ENCODE measurements at regions of chr3 and their contacts with region 1.

Region 1: DNA sequence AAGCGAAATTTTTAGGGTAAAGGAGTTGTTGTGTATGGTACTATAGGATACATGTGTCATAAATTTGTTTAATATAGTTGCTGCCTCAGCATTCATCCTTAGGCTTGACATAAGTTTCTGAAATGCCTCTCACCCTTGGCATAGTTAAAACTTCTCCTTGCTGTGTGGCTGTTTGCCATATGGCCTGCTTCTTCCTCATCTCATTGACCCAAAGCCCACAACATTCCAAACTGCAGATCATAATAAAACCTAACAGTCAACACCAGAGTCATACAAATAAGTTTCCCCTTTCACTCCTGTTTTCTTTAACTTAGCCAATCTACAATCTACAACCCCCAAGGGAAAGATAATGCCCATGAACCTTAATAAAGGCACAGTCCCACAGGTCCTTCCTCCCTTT is 136.6 kb downstream of the TMCC1 start:
- DNase-seq: peak; percentile 66
- ATAC-seq: peak; percentile 80
- H3K4me3 ChIP-seq: no peak overlapping the region
- H3K27ac ChIP-seq: no peak overlapping the region
- H3K4me1 ChIP-seq: peaks cover 2% of the 10 kb centered on the region; the same call in 1 of the 2 replicates
- H3K27me3 ChIP-seq: no peaks in the 10 kb centered on the region
- CTCF ChIP-seq: no peak
- POLR2A ChIP-seq: no peak
- RAD21 ChIP-seq: no peak

Region 2: GRCh38 chr3:129801354-129801753 is 44.5 kb after region 1 on chr3:
- CTCF ChIA-PET with region 1: no interaction called
- POLR2A ChIA-PET with region 1: no interaction called
- dilution Hi-C with region 1: no loop called
- in situ Hi-C with region 1: no loop called
- intact Hi-C with region 1: loop called (anchors 5 kb)
- DNase-seq: no peak
- ATAC-seq: no peak
- H3K4me3 ChIP-seq: no peak overlapping the region
- H3K27ac ChIP-seq: no peak overlapping the region
- H3K4me1 ChIP-seq: no peaks in the 10 kb centered on the region
- H3K27me3 ChIP-seq: no peaks in the 10 kb centered on the region
- CTCF ChIP-seq: no peak
- POLR2A ChIP-seq: no peak
- RAD21 ChIP-seq: no peak